AG04450 (cell line): ENCODE measurements at regions of chr2 and their contacts with region 1.

Region 1: DNA sequence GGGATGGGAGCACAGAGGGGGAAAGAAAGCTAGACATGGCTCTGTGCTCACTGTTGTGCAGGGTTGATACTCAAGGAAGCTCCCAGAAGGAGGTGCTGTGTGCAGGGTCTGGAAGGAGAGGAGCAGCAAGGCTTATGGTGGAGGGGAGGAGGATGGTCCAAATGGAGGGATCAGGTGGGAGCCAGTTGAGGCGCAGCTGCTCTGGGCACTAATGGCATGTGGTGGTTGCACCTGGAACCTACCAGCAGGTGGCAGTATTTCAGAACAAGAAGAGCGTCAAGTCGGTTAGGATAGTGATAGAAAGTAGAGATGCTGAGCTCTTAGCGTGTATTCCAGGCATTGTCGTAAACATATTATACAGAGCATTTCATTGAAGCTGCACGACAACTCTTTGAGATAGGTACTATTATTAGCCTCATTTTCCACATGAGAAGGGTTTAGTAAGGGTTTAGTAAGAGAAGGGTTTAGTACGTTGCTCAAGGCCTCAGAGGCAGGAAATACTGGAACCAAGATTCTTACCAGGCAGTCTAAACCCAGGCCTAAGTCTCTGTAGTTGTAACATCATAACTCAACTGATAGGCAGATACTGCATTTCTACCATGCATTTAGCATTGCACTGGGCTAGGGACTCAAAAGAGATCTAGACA is 223.7 kb downstream of the CYP26B1 start:
- DNase-seq: peak; percentile 18
- H3K4me3 ChIP-seq: no peak overlapping the region
- H3K27ac ChIP-seq: no peak overlapping the region
- H3K27me3 ChIP-seq: peaks cover 19% of the 10 kb centered on the region
- CTCF ChIP-seq: peak; percentile 74

Region 2: GRCh38 chr2:71907503-71907902 is 16.5 kb before region 1 on chr2:
- CTCF ChIA-PET with region 1: interaction called, 23 read pairs
- POLR2A ChIA-PET with region 1: no interaction called
- DNase-seq: no peak
- H3K4me3 ChIP-seq: no peak overlapping the region
- H3K27ac ChIP-seq: no peak overlapping the region
- H3K27me3 ChIP-seq: no peaks in the 10 kb centered on the region
- CTCF ChIP-seq: no peak

Region 3: DNA sequence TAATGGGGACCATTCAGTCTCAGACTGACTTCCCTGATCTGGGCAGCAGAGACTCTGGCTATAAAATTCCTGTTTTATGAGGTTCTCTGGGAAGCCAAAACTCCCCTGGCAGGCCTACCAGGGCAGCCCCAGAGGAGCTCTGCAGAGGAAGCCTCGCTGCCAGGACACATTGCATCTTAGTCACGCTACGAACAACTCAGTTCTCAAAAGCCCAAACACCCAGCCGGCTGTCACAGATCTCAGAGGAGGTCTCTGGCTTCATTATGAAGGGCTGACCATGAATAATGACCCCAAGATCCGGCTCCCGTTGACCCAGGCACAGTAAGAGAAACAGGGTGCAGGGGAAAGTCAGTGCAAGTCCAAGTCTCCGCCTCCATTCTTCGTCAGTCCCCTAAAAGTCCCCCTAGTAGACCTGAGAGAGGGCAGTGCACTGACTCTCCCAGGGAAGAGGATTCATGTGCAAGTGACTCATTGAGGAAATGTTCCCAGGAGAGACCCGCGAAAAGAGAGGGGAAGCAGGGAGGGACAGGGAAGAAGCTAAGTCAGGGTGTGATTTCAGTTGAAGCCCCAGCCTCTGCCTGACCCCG is 11.3 kb after region 1 on chr2:
- CTCF ChIA-PET with region 1: interaction called, 31 read pairs
- POLR2A ChIA-PET with region 1: no interaction called
- DNase-seq: no peak
- H3K4me3 ChIP-seq: no peak overlapping the region
- H3K27ac ChIP-seq: no peak overlapping the region
- H3K27me3 ChIP-seq: peaks cover 3% of the 10 kb centered on the region
- CTCF ChIP-seq: no peak

Region 4: DNA sequence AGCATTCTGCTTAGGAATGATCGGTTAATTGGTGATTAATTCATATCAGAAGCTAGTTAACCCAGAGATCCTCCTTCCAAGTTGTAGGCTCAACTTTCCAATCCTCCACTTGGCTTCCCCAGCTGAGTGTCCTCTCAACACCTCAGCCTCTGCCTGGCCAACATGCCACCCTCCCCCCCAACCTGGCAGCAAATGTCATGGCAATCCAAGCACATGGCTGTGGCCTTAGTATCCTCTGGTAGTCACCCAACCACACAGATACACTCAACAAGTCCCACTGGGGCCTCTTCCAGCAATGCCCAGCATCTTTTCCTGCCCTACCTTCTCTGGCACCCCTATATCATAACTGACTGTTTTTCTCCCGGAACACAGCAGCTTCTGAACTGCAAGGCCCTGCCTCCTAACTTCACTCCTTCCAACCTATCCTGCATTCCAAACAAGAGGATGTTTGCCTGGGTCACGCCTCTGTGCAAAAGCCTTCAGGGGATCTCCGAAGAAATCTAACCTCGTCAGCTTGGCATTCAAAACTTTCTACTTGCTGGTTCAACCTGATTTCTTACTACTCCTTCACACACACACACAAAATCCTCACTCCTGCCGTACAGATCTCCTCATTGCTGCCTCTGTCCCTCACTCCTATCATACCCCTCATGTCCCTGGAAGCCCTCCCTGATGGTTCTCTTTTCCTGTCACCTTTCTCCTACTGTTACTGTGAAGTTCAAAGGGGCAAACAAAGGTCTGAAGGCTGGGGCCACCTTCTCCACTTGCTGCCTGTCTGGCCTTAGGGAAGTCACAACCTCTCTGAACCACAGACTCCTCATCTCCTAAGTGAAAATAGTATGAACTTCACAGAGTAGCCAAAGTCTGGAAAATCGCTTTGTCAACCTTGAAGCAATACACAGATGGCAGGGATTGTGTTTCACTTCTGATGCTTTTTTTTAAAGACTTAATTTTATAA is 28.8 kb after region 1 on chr2:
- CTCF ChIA-PET with region 1: interaction called, 12 read pairs
- POLR2A ChIA-PET with region 1: no interaction called
- DNase-seq: no peak
- H3K4me3 ChIP-seq: no peak overlapping the region
- H3K27ac ChIP-seq: no peak overlapping the region
- H3K27me3 ChIP-seq: peaks cover 4% of the 10 kb centered on the region
- CTCF ChIP-seq: no peak

Region 5: DNA sequence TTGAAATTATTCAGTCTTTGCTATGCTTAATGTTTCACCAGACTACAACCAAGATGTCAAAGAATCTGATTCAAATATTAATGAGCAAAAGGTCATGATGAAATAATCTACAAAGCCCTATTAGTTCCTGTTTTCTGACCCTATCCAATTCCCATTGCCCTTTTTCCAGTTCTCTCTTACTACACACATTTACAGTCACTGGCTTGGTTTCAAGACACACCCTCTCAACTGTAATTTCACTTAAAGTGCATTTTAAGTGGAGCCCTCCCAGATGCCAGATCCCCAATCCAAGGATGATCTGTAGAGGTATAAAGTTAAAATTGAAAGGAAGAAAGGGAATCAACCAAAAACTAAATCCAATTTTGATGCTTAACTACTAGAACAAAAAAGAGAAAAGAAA is 470.7 kb after region 1 on chr2:
- CTCF ChIA-PET with region 1: no interaction called
- POLR2A ChIA-PET with region 1: no interaction called
- DNase-seq: no peak
- H3K4me3 ChIP-seq: no peak overlapping the region
- H3K27ac ChIP-seq: no peak overlapping the region
- H3K27me3 ChIP-seq: no peaks in the 10 kb centered on the region
- CTCF ChIP-seq: no peak

Region 6: DNA sequence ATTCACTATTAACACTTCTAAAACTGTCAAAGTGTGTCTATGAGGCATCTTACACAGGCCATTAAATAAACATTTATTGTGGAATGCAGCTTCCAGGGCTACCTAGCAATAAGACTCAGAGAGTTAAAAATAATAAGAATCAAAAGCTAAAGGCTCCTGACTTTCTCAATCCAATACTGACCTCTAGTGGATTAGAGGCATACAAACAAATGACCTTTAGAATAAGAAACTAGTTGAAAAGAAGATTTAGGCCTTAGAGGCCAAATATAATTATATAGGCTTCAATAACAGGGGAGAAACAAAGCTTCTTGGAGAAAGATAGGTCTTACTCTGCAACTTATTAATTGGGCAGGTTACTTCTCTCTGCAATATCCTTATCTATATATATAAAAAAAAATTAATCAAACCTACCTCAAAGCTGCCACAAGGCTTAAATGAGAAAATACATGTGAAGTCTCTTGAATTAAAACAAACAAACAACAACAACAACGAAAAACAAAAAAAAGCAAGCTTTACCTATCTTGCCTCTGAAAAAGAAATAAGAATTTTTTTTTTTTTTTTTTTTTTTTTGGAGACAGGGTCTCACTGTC is 655.7 kb after region 1 on chr2:
- CTCF ChIA-PET with region 1: interaction called, 63 read pairs
- POLR2A ChIA-PET with region 1: no interaction called
- DNase-seq: peak; percentile 11
- H3K4me3 ChIP-seq: no peak overlapping the region
- H3K27ac ChIP-seq: no peak overlapping the region
- H3K27me3 ChIP-seq: no peaks in the 10 kb centered on the region
- CTCF ChIP-seq: peak; percentile 71

Region 7: DNA sequence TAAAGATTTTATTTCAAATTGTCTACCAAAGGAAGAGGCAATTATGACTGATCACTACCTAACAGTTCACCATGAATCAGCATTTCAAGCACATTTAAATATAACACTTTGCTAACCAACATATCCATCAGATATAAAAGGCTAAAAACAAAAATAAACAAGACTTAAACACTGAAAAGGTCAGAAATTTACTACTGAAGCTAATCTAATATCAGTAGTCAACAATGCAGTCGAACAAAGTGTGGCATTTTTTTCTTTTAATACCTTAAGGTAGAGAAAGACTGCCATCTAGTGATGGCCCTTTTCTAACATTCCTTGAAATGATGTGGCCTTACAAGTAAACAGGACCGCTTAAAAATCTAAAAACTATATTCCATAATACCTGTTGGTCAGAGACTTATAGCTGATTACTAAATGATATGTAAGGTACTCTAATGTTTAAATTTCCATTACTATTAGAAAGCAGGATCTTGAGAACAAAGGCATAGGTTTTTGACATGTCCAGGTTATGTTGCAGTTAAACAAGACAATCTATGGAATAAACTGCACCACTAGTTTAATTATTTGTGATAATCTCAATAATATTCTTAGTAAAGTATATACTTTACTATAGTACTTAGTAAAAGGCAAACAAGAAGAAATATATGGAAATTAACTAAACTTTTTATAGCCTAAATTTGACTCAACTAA is 821.8 kb after region 1 on chr2:
- CTCF ChIA-PET with region 1: interaction called, 29 read pairs
- POLR2A ChIA-PET with region 1: no interaction called
- DNase-seq: peak; percentile 42
- H3K4me3 ChIP-seq: no peak overlapping the region
- H3K27ac ChIP-seq: no peak overlapping the region
- H3K27me3 ChIP-seq: no peaks in the 10 kb centered on the region
- CTCF ChIP-seq: peak; percentile 77